ENCODE measurements at regions of chr13 and their contacts with region 1.

Region 1: DNA sequence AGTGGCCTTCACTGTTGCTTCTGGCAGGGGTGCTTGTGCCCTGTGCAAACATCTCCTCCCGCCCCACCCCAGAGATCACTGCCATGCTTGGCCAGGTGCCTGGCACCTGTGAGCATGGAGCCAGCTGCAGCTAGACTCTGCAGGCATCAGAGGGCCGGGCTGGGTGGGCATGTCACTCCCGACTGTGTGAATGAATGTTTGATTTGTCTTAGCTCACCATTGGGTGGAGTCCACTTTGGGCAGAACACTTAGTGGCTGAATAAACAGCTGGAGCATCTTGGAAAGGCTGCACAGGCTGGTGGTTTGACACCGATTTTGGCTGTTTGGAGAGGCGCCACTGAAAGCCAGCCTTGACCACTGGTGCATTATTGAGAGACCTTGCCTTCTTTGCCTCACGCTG is 267.3 kb downstream of the DLEU7 start:
- DNase-seq: no peak
- ATAC-seq: no peak
- H3K4me3 Mint-ChIP-seq: no peak overlapping the region
- H3K27ac Mint-ChIP-seq: no peak overlapping the region
- H3K4me1 Mint-ChIP-seq: peaks cover 17% of the 10 kb centered on the region
- H3K27me3 Mint-ChIP-seq: no peaks in the 10 kb centered on the region
- CTCF ChIP-seq: no peak

Region 2: GRCh38 chr13:50529154-50529882 is 46.8 kb before region 1 on chr13:
- CTCF ChIA-PET with region 1: no interaction called
- POLR2A ChIA-PET with region 1: no interaction called
- intact Hi-C with region 1: no loop called
- DNase-seq: no peak
- ATAC-seq: no peak
- H3K4me3 Mint-ChIP-seq: no peak overlapping the region
- H3K27ac Mint-ChIP-seq: no peak overlapping the region
- H3K4me1 Mint-ChIP-seq: peaks cover 31% of the 10 kb centered on the region
- H3K27me3 Mint-ChIP-seq: no peaks in the 10 kb centered on the region
- CTCF ChIP-seq: no peak

Region 3: GRCh38 chr13:50539791-50540530 is 36.2 kb before region 1 on chr13:
- CTCF ChIA-PET with region 1: no interaction called
- POLR2A ChIA-PET with region 1: no interaction called
- intact Hi-C with region 1: loop called (anchors 5 kb)
- DNase-seq: no peak
- ATAC-seq: no peak
- H3K4me3 Mint-ChIP-seq: no peak overlapping the region
- H3K27ac Mint-ChIP-seq: no peak overlapping the region
- H3K4me1 Mint-ChIP-seq: no peaks in the 10 kb centered on the region
- H3K27me3 Mint-ChIP-seq: no peaks in the 10 kb centered on the region
- CTCF ChIP-seq: no peak

Region 4: DNA sequence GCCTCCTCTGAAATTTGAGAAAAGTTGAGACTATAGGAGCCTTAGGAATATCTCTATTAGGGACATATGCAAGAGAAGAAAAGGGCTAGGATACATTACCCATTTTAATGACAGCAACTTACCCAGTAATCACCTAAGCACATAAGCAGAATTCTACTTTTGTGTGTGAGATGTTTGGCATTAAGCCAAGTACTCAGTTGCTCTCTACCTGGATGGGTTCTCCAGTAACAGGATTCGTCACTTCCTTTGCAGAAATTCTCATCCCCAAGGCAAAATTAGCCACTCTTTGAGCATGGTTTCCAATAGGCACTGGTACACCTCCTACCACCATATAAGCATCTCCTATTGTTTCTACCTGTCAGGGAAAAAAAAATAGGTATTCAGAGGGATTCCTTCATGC is 439.8 kb after region 1 on chr13:
- CTCF ChIA-PET with region 1: no interaction called
- POLR2A ChIA-PET with region 1: no interaction called
- intact Hi-C with region 1: no loop called
- DNase-seq: no peak
- ATAC-seq: no peak
- H3K4me3 Mint-ChIP-seq: no peak overlapping the region
- H3K27ac Mint-ChIP-seq: no peak overlapping the region
- H3K4me1 Mint-ChIP-seq: no peaks in the 10 kb centered on the region
- H3K27me3 Mint-ChIP-seq: peaks cover 2% of the 10 kb centered on the region
- CTCF ChIP-seq: no peak